ENCODE measurements at regions of chr12 and their contacts with region 1.

Region 1: DNA sequence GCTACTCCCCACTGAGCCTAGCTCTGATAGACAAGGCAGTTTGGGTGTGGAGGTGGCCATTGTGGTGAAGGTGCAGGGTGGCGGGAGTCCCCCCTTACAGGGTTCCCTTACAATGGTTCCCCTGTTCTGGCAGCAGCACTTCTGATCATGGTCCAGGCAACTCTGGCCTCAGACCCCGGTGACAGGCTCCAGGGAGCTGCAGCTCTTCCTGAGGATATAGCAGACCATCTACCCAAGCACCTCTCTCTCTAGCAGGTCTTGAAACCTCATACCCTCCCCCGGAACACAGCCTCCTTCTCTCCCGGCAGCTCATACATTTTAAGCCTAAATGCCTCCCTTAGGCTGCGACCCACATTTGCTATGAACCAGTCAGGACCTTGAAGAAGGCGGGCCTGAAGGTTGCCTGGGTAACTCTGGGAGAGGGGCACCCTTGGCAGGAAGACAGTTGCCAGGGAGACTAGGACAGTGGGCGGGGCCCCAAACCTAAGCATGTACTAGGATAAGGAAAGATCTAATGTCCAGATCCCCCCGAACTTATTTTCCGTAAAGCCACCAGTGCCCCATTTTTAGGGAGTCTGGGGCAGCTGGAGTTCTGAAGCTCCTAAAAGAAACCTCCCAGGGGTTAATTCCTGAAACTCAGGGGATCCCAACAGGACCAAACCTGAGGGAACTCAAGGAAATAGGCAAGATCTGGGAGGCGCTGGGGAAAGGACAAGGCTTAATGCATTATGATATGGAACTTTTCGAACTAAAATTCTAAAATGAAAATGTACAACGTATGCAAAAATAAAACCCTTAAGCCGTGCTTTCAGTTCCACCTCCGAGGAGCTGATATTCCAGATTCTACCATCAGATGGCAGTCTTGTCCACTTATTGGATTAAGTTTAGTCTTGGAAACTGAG is 4.5 kb upstream of the GDF11 start:
- DNase-seq: peak in 8 of 9 donors; percentile 69 to 88 (median 81)
- ATAC-seq: peak; percentile 79
- H3K4me3 ChIP-seq: peak overlapping the region; percentile 91
- H3K4me3 Mint-ChIP-seq: peak overlapping the region; percentile 74 to 94 (median 89)
- H3K27ac ChIP-seq: peak overlapping the region; percentile 76
- H3K27ac Mint-ChIP-seq: peak overlapping the region; percentile 86 to 96 (median 92)
- H3K4me1 ChIP-seq: peaks cover 15 to 18% of the 10 kb centered on the region in 2 donors
- H3K4me1 Mint-ChIP-seq: peaks cover 26 to 43% (median 29%) of the 10 kb centered on the region in 7 donors
- H3K27me3 ChIP-seq: no peaks in the 10 kb centered on the region
- H3K27me3 Mint-ChIP-seq: peaks cover 0 to 8% (median 0%) of the 10 kb centered on the region in 5 donors

Region 2: GRCh38 chr12:55681142-55682077 is 57.0 kb before region 1 on chr12:
- CTCF ChIA-PET with region 1: no interaction called
- POLR2A ChIA-PET with region 1: no interaction called
- intact Hi-C with region 1: loop called in 1 of 2 experiments (anchors 1 kb)
- DNase-seq: peak in 1 of 9 donors; percentile 7
- ATAC-seq: peak; percentile 40
- H3K4me3 ChIP-seq: no peak overlapping the region
- H3K4me3 Mint-ChIP-seq: peak overlapping the region in 3 of 10 donors; percentile 27 to 64 (median 37)
- H3K27ac ChIP-seq: no peak overlapping the region
- H3K27ac Mint-ChIP-seq: peak overlapping the region in 1 of 9 donors; percentile 43
- H3K4me1 ChIP-seq: no peaks in the 10 kb centered on the region
- H3K4me1 Mint-ChIP-seq: peaks cover 4 to 18% (median 12%) of the 10 kb centered on the region in 7 donors
- H3K27me3 ChIP-seq: no peaks in the 10 kb centered on the region
- H3K27me3 Mint-ChIP-seq: peaks cover 25 to 41% (median 31%) of the 10 kb centered on the region in 5 donors

Region 3: GRCh38 chr12:55817346-55818139 is 79.2 kb after region 1 on chr12 and contains the starts of genes ORMDL2 and SARNP:
- CTCF ChIA-PET with region 1: interaction called, 9 read pairs
- POLR2A ChIA-PET with region 1: interaction called, 31 read pairs
- intact Hi-C with region 1: loop called (anchors 1 kb)
- DNase-seq: peak; percentile 81 to 99 (median 98)
- ATAC-seq: peak; percentile 96
- H3K4me3 ChIP-seq: peak within 1 kb of the TSS; percentile 94
- H3K4me3 Mint-ChIP-seq: no peak within 1 kb of the TSS
- H3K27ac ChIP-seq: peak within 1 kb of the TSS; percentile 88
- H3K27ac Mint-ChIP-seq: no peak within 1 kb of the TSS
- H3K4me1 ChIP-seq: peaks cover 22 to 41% of the 10 kb centered on the region in 2 donors
- H3K4me1 Mint-ChIP-seq: peaks cover 32 to 45% (median 37%) of the 10 kb centered on the region in 7 donors
- H3K27me3 ChIP-seq: no peaks in the 10 kb centered on the region
- H3K27me3 Mint-ChIP-seq: no peaks in the 10 kb centered on the region
- total RNA-seq, gene ORMDL2: 12.3 to 67.3 (median 40.5) TPM
- total RNA-seq, gene SARNP: 28.0 to 73.0 (median 41.7) TPM

Region 4: GRCh38 chr12:55874443-55874842 is 136.1 kb after region 1 on chr12:
- CTCF ChIA-PET with region 1: no interaction called
- POLR2A ChIA-PET with region 1: no interaction called
- intact Hi-C with region 1: no loop called
- DNase-seq: no peak
- ATAC-seq: no peak
- H3K4me3 ChIP-seq: no peak overlapping the region
- H3K4me3 Mint-ChIP-seq: no peak overlapping the region
- H3K27ac ChIP-seq: no peak overlapping the region
- H3K27ac Mint-ChIP-seq: peak overlapping the region in 1 of 9 donors; percentile 12
- H3K4me1 ChIP-seq: no peaks in the 10 kb centered on the region
- H3K4me1 Mint-ChIP-seq: peaks cover 0 to 4% (median 0%) of the 10 kb centered on the region in 7 donors
- H3K27me3 ChIP-seq: no peaks in the 10 kb centered on the region
- H3K27me3 Mint-ChIP-seq: no peaks in the 10 kb centered on the region

Region 5: DNA sequence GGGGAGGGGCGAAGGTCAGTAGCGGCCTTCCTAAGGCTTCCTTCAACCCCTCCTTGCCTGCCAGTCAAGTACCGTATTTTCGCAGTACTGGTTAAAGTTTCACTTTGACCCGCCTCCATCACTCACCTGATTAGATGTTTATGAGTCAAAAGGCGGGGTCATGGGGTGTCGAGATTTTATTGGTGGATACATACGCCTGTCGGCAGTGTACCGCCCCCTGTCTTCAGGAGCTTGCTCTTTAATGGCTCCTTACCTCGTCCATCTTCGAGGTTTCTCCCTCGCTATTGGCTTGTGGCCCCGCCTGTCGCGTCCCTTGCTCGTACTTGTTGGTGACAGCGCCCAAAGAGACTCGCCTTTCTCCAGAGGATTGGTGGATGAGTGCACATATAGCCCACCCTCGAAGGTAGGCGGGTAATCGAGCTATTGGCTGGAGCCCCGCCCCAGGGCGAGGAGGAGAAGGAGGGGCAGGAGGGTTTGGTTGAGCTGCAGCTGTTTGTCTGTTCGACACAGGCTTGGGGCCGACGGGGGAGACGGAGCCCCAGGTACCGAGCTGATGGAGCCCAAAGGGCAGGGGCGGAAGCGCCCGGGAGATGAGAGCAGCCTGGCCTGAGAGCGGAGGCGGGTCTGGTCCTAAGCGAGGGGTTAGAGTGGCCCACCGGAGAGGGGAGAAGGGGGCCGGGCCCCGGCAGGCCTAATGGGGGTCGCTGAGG is 235.4 kb after region 1 on chr12 and contains the start of gene RAB5B:
- CTCF ChIA-PET with region 1: interaction called, 7 read pairs
- POLR2A ChIA-PET with region 1: interaction called, 13 read pairs
- intact Hi-C with region 1: loop called in 1 of 2 experiments (anchors 1 kb)
- DNase-seq: peak; percentile 81 to 100 (median 98)
- ATAC-seq: peak; percentile 92
- H3K4me3 ChIP-seq: peak within 1 kb of the TSS; percentile 84
- H3K4me3 Mint-ChIP-seq: no peak within 1 kb of the TSS
- H3K27ac ChIP-seq: peak within 1 kb of the TSS; percentile 88
- H3K27ac Mint-ChIP-seq: no peak within 1 kb of the TSS
- H3K4me1 ChIP-seq: peaks cover 8 to 19% of the 10 kb centered on the region in 2 donors
- H3K4me1 Mint-ChIP-seq: peaks cover 18 to 31% (median 26%) of the 10 kb centered on the region in 7 donors
- H3K27me3 ChIP-seq: no peaks in the 10 kb centered on the region
- H3K27me3 Mint-ChIP-seq: no peaks in the 10 kb centered on the region
- total RNA-seq, gene RAB5B: 45.2 to 109 (median 62.7) TPM

Region 6: DNA sequence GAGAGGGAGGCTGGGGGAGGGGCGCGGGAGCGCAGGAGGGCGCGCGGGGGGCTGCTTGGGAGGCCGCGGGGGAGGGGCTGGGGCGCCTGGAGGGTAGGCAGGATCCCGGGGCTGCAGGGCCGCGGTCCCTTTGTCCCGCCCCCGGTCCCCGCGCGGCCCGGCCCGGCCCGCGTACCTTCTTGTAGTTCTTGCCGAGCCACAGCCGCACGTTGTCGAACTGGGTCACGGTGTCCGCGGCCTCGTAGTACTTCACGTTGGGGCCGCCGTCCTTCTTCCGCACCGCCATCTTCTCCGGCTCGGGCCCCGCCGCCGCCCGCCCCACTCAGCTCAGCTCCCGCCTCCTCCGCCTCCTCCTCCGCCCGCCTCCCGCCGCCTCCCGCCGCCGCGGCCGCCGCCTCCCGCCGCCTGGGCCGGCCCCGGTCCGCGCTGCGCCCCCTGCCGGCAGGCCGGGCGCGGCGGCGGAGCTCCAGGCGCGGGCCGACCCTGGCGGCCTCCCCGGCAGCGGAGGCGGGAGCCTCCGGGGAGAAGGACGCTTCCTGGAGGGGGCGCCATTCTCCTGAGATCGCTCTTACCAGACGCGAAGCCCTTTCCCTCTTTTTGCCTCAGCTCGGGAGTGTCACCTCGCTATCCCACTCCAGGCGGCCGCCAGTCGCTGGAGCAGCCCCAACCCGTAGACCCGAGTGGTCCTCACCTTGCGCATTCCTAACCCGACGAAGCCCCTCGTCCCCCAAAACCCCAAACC is 451.0 kb after region 1 on chr12 and contains the start of gene SMARCC2:
- CTCF ChIA-PET with region 1: interaction called, 10 read pairs
- POLR2A ChIA-PET with region 1: interaction called, 6 read pairs
- intact Hi-C with region 1: loop called (anchors 1 to 10 kb)
- DNase-seq: peak; percentile 78 to 93 (median 82)
- ATAC-seq: peak; percentile 93
- H3K4me3 ChIP-seq: peak within 1 kb of the TSS; percentile 91
- H3K4me3 Mint-ChIP-seq: peak within 1 kb of the TSS; percentile 76 to 98 (median 95)
- H3K27ac ChIP-seq: peak within 1 kb of the TSS; percentile 92
- H3K27ac Mint-ChIP-seq: peak within 1 kb of the TSS; percentile 93 to 99 (median 98)
- H3K4me1 ChIP-seq: peaks cover 9 to 19% of the 10 kb centered on the region in 2 donors
- H3K4me1 Mint-ChIP-seq: peaks cover 37 to 55% (median 49%) of the 10 kb centered on the region in 7 donors
- H3K27me3 ChIP-seq: no peaks in the 10 kb centered on the region
- H3K27me3 Mint-ChIP-seq: peaks cover 0 to 4% (median 0%) of the 10 kb centered on the region in 5 donors
- total RNA-seq, gene SMARCC2: 118 to 187 (median 149) TPM

Region 7: GRCh38 chr12:56468216-56469006 is 730.0 kb after region 1 on chr12 and contains the start of gene SPRYD4:
- CTCF ChIA-PET with region 1: no interaction called
- POLR2A ChIA-PET with region 1: no interaction called
- intact Hi-C with region 1: loop called in 1 of 2 experiments (anchors 1 kb)
- DNase-seq: peak; percentile 89 to 97 (median 96)
- ATAC-seq: peak; percentile 99
- H3K4me3 ChIP-seq: peak within 1 kb of the TSS; percentile 99
- H3K4me3 Mint-ChIP-seq: peak within 1 kb of the TSS; percentile 90 to 99 (median 97)
- H3K27ac ChIP-seq: peak within 1 kb of the TSS; percentile 87
- H3K27ac Mint-ChIP-seq: peak within 1 kb of the TSS; percentile 92 to 99 (median 98)
- H3K4me1 ChIP-seq: peaks cover 12 to 20% of the 10 kb centered on the region in 2 donors
- H3K4me1 Mint-ChIP-seq: peaks cover 6 to 51% (median 26%) of the 10 kb centered on the region in 7 donors
- H3K27me3 ChIP-seq: no peaks in the 10 kb centered on the region
- H3K27me3 Mint-ChIP-seq: no peaks in the 10 kb centered on the region
- total RNA-seq, gene SPRYD4: 5.2 to 7.5 (median 7.2) TPM

Measured in naive thymus-derived CD4-positive, alpha-beta T cell (primary cell).